ENCODE measurements at regions of chr9 and their contacts with region 1.

Region 1: DNA sequence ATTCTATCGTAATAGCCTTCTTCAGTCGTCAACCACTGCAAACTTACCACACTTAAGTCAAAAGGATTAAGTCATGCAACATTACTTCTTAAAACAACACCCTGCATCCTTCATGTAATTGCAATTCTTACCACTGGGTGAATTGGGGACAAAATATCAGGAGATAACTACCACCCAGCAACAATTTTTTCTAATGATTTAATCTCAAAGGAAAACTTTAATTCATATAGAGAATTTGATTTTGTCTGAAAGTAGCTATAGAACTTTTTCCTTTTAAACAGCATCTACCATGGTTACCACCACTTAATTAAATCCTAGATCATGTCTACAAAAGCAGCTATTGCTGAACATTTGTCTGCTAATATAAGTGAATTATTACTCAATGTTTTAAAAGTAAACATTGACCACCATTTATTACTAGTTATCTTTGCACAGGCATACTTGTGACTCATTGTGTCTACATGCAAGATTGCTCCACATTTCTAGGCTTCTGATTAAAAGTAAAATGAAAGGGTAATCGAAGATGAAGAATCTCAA is 10.5 kb downstream of the MLLT3 start:
- DNase-seq: no peak
- ATAC-seq: peak; percentile 75
- H3K4me3 ChIP-seq: no peak overlapping the region; the same call in 1 of the 2 replicates
- H3K27ac ChIP-seq: no peak overlapping the region
- H3K4me1 ChIP-seq: no peaks in the 10 kb centered on the region; the same call in 1 of the 2 replicates
- H3K27me3 ChIP-seq: no peaks in the 10 kb centered on the region
- CTCF ChIP-seq: peak in 2 of 3 experiments; percentile 36 to 39; a peak in 3 of 6 replicates
- EP300 ChIP-seq: no peak
- POLR2A ChIP-seq: no peak
- RAD21 ChIP-seq: 0 out of 2 replicates have a peak, but pooled peaks have one; percentile 20

Region 2: DNA sequence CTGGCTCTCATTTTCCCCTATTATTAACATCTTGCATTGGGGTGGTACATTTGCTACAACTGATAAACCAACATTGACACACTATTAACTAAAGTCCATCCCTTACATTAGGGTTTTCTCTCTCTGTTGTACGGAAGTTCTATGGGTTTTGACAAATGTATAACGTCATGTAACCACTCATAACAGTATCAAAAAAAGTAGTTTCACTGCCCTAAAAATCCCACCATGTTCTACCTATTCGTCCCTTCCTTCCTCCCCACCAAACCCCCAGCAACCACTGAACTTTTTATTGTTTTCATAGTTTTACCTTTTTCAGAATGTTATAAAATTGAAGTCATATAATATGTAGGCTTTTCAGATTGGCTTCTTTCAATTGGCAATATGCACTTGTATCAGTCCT is 29.7 kb before region 1 on chr9:
- CTCF ChIA-PET with region 1: interaction called, 3 read pairs
- POLR2A ChIA-PET with region 1: interaction called, 7 read pairs
- RAD21 ChIA-PET with region 1: interaction called, 6 read pairs
- SMC1A ChIA-PET with region 1: interaction called, 10 read pairs
- in situ Hi-C with region 1: no loop called
- intact Hi-C with region 1: no loop called
- DNase-seq: peak; percentile 37
- ATAC-seq: peak; percentile 87
- H3K4me3 ChIP-seq: no peak overlapping the region
- H3K27ac ChIP-seq: peak overlapping the region; percentile 46
- H3K4me1 ChIP-seq: peaks cover 16% of the 10 kb centered on the region
- H3K27me3 ChIP-seq: no peaks in the 10 kb centered on the region
- CTCF ChIP-seq: no peak
- EP300 ChIP-seq: peak; percentile 46 to 65; a peak in 2 of 4 replicates
- POLR2A ChIP-seq: no peak
- RAD21 ChIP-seq: no peak

Region 3: DNA sequence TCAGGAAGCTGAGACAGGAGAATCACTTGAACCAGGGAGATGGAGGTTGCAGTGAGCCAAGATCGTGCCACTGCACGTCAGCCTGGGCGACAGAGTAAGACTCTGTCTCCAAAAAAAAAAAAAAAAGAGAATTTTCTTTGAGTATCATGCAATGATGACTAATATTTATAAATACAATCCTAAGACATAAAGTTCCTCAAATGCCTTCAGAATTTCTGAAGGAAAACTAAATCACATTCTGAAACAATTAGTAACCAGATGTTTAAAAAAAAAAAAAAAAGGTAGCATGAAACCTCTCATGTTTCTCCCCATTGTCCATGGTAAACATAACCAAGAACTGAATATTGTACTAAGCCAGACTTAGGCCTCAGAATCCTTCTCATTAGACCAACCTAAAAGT is 12.6 kb before region 1 on chr9:
- CTCF ChIA-PET with region 1: interaction called, 25 read pairs
- POLR2A ChIA-PET with region 1: interaction called, 7 read pairs
- RAD21 ChIA-PET with region 1: interaction called, 55 read pairs
- SMC1A ChIA-PET with region 1: interaction called, 68 read pairs
- in situ Hi-C with region 1: no loop called
- intact Hi-C with region 1: no loop called
- DNase-seq: no peak
- ATAC-seq: no peak
- H3K4me3 ChIP-seq: no peak overlapping the region
- H3K27ac ChIP-seq: no peak overlapping the region
- H3K4me1 ChIP-seq: peaks cover 27% of the 10 kb centered on the region
- H3K27me3 ChIP-seq: no peaks in the 10 kb centered on the region
- CTCF ChIP-seq: no peak
- EP300 ChIP-seq: no peak
- POLR2A ChIP-seq: no peak
- RAD21 ChIP-seq: no peak

Measured in GM12878 (cell line).